ENCODE measurements at regions of chr18 and their contacts with region 1.

Region 1: GRCh38 chr18:45664824-45665763 is 49.8 kb downstream of the SLC14A2 start:
- DNase-seq: no peak
- ATAC-seq: peak; percentile 80
- H3K4me3 Mint-ChIP-seq: no peak overlapping the region
- H3K27ac Mint-ChIP-seq: peak overlapping the region; percentile 25
- H3K4me1 Mint-ChIP-seq: peaks cover 33% of the 10 kb centered on the region
- H3K27me3 Mint-ChIP-seq: no peaks in the 10 kb centered on the region
- CTCF ChIP-seq: no peak

Region 2: DNA sequence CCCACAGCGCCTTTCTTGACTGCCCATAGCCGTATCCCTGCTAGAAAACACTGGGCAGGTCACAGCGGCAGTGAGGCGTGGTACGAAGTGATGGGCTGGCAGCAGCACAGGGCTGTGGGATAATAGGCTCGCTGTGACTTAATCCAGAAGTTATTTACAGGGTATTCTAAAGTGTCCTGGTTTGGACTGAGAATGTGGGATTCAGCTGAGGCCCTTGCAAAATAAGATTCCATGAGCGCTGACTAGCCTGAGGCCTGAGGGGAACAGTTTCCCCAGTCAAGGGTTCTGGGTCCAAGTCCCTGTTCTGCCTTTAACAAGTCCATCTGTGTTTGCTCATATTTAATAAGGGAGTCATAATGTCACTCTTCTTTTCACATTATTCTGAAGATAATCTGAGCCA is 949.8 kb before region 1 on chr18:
- CTCF ChIA-PET with region 1: no interaction called
- POLR2A ChIA-PET with region 1: no interaction called
- intact Hi-C with region 1: no loop called
- DNase-seq: no peak
- ATAC-seq: no peak
- H3K4me3 Mint-ChIP-seq: no peak overlapping the region
- H3K27ac Mint-ChIP-seq: no peak overlapping the region
- H3K4me1 Mint-ChIP-seq: peaks cover 76% of the 10 kb centered on the region
- H3K27me3 Mint-ChIP-seq: no peaks in the 10 kb centered on the region
- CTCF ChIP-seq: no peak

Region 3: DNA sequence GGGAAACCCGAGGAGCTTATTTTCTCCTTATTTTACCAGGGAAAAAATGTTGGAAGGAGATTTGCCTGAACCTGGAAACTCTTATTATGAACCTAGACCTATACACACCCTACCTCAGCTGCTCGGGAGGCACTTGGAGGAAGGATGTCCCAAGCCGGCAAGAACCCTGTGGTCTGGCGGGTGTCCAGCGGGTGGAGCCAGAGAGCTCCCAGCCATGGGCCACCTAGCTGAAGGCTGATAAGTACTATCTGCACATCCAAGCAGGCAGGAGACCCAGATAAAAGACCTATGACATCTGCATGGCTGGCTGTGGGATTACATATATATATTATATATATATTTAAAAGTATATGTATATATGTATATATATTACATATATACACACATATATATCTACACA is 57.8 kb after region 1 on chr18:
- CTCF ChIA-PET with region 1: interaction called, 20 read pairs
- POLR2A ChIA-PET with region 1: no interaction called
- intact Hi-C with region 1: loop called (anchors 1 kb)
- DNase-seq: peak; percentile 50
- ATAC-seq: peak; percentile 80
- H3K4me3 Mint-ChIP-seq: no peak overlapping the region
- H3K27ac Mint-ChIP-seq: no peak overlapping the region
- H3K4me1 Mint-ChIP-seq: no peaks in the 10 kb centered on the region
- H3K27me3 Mint-ChIP-seq: peaks cover 8% of the 10 kb centered on the region
- CTCF ChIP-seq: no peak

Region 4: DNA sequence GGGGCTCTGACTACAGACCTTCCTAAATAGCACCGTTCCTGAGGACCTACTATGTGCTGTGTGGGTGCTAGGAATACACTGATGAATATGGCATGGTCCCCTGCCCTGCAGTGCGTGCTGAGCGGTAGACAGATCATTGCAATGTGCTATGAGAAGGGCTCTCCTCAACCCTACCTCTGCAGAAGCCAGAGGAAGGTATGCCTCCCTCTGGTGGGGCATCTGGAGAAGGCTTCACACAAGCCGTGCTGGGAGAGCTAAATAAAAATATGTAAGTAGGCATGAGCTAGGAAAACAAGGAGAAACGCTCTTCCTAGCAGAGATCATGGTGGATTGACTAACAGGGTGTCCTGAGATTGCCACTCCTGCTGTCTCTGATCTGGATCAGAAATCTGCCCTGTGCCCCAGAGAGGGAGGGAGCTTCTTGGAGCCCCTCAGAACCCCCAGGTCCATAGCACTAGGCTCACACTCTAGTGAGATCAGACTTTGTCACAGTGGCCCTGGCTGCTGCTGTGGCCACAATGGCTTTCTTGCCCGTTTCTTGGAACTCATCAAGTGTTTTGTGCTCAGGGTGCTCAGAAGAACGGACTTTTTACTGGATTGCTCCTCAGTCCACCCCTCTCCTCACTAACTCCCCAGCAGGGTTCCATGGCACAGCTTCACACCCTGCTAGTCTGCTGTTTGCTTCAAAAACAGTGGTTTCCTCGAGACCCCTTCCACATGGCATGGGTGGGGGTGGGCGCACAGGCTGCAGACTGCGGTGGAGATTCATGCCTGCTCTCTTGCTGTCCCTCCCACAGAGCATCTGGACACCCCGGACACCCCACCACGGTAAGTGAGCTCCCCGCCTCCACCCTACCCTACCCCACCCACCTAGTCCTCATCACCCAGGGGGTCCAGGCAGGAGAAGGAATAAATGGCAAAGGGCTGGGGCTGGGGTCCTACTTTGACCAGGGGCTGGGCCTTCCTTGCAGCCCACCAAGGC is 174.6 kb after region 1 on chr18:
- CTCF ChIA-PET with region 1: interaction called, 7 read pairs
- POLR2A ChIA-PET with region 1: no interaction called
- intact Hi-C with region 1: loop called (anchors 5 kb)
- DNase-seq: no peak
- ATAC-seq: peak; percentile 40
- H3K4me3 Mint-ChIP-seq: no peak overlapping the region
- H3K27ac Mint-ChIP-seq: no peak overlapping the region
- H3K4me1 Mint-ChIP-seq: peaks cover 10% of the 10 kb centered on the region
- H3K27me3 Mint-ChIP-seq: peaks cover 49% of the 10 kb centered on the region
- CTCF ChIP-seq: no peak

Region 5: DNA sequence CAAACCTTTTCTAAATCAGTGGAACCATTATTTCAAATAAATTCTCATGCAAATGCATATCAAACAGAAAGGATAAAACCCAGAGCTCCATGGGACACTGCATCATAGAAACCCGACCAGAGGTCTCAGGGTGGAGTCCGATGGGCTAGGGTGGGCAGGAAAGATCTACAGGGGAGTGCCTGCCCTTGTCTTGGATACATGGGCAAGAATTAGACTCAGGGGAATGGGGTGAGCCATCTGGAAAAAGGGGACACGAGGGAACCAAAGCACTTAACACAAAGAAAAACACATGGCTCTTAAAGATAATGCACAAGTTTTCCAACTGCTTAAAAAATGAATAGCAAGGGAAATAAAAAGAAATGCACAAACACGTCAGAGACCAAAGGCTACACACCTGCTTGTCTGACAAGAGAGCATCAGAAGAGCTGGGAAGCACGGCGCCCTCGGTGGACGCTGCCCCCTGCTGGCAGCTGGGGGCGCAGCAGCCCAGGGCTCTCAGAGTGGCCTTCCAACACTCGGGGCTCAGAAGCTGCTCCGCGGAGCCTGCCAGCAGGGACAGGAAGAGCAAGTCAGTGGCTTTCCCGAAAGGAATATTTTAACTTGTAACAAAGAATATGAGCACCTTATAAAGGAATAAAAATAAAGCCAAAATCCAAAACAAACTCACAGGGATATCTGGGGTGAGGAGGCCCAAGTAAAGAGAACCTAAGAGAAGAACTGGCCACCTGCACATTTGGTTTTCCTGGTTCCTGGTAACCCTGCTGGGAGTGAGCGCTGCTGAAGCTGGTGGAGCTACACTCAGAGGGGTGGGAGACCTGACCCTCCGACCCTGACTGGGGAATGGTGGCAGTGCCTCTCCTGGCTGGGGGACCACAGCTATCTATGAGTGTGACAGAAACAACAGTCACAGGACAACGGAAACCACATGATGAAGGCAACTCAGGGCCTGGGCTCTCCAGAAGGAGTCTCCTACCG is 214.9 kb after region 1 on chr18:
- CTCF ChIA-PET with region 1: interaction called, 180 read pairs
- POLR2A ChIA-PET with region 1: interaction called, 4 read pairs
- intact Hi-C with region 1: loop called (anchors 1 kb)
- DNase-seq: peak; percentile 62
- ATAC-seq: peak; percentile 92
- H3K4me3 Mint-ChIP-seq: no peak overlapping the region
- H3K27ac Mint-ChIP-seq: peak overlapping the region; percentile 41
- H3K4me1 Mint-ChIP-seq: peaks cover 11% of the 10 kb centered on the region
- H3K27me3 Mint-ChIP-seq: no peaks in the 10 kb centered on the region
- CTCF ChIP-seq: peak; percentile 93

Region 6: DNA sequence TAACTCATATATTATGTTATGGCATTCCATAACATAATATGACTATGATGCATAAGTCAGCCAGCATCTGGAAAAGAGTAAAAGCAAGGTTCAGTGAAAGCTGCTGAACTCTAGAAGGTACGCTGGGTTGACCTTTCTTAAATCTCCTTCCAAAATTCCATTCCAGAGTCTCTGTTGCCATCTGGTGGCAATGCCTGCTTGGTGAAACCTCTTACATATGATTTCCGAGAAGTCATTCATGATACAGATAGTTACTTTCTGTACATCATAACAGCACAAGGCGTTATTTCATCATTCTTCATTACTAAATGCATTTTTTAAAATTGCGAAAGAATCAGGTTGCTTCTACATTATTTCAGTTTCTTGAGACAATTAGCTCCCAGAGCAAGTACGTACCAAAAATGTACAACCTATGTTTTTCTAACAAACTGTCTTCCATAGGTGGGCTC is 309.0 kb after region 1 on chr18:
- CTCF ChIA-PET with region 1: interaction called, 21 read pairs
- POLR2A ChIA-PET with region 1: no interaction called
- intact Hi-C with region 1: loop called (anchors 1 kb)
- DNase-seq: no peak
- ATAC-seq: peak; percentile 54
- H3K4me3 Mint-ChIP-seq: no peak overlapping the region
- H3K27ac Mint-ChIP-seq: no peak overlapping the region
- H3K4me1 Mint-ChIP-seq: peaks cover 4% of the 10 kb centered on the region
- H3K27me3 Mint-ChIP-seq: no peaks in the 10 kb centered on the region
- CTCF ChIP-seq: no peak

Region 7: DNA sequence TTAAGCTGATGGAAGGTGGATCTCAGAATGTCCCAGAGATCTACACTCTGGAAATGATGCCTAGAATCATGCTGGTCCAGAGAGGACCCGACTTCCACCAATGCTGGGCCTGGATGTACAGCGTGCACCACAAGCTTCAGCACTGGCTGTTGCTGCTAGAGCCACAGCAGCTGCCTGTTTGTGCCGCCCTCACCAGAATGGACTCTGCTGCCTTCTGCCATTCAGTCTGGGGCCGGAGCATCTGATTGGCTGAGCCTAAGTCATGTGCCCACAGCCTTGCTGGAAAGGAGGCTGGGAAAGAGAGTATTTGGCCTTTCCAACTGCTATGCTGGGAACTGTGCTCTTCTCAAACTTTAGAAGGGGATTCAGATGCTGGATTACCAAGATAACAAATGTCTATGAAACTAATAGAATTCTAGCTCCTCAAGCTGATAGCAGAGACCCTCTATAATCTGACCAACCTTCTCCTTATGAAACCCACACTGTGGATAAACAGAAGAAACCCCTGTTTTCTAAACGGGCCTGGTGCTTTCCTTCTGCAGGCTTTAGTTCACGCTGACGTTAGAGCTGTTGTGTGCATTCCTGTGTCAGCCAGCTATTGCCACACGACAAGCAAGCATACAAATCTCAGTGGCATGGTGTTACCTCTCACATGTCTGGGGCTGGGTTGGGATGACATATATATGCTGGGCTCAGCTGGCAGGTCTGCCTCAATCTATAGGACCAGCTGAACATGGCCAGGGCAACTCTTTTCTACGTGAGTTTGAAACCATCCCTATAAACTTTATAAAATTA is 996.1 kb after region 1 on chr18:
- CTCF ChIA-PET with region 1: no interaction called
- POLR2A ChIA-PET with region 1: no interaction called
- intact Hi-C with region 1: loop called (anchors 1 kb)
- DNase-seq: no peak
- ATAC-seq: no peak
- H3K4me3 Mint-ChIP-seq: no peak overlapping the region
- H3K27ac Mint-ChIP-seq: no peak overlapping the region
- H3K4me1 Mint-ChIP-seq: no peaks in the 10 kb centered on the region
- H3K27me3 Mint-ChIP-seq: peaks cover 3% of the 10 kb centered on the region
- CTCF ChIP-seq: no peak